ENCODE measurements at regions of chr9 and their contacts with region 1.

Region 1: GRCh38 chr9:94681508-94681907 is 42.2 kb upstream of the FBP1 start:
- DNase-seq: peak; percentile 81
- H3K4me3 ChIP-seq: no peak overlapping the region
- CTCF ChIP-seq: peak; percentile 72

Region 2: GRCh38 chr9:94464790-94465189 is 216.7 kb before region 1 on chr9:
- in situ Hi-C with region 1: no loop called
- DNase-seq: no peak
- H3K4me3 ChIP-seq: no peak overlapping the region
- CTCF ChIP-seq: no peak

Region 3: GRCh38 chr9:95127249-95128176 is 446.0 kb after region 1 on chr9:
- in situ Hi-C with region 1: loop called (anchors 25 kb)
- DNase-seq: peak; percentile 81
- H3K4me3 ChIP-seq: peak overlapping the region; percentile 39
- CTCF ChIP-seq: peak; percentile 99